Caco-2 (cell line): ENCODE measurements at regions of chr2 and their contacts with region 1.

Region 1: DNA sequence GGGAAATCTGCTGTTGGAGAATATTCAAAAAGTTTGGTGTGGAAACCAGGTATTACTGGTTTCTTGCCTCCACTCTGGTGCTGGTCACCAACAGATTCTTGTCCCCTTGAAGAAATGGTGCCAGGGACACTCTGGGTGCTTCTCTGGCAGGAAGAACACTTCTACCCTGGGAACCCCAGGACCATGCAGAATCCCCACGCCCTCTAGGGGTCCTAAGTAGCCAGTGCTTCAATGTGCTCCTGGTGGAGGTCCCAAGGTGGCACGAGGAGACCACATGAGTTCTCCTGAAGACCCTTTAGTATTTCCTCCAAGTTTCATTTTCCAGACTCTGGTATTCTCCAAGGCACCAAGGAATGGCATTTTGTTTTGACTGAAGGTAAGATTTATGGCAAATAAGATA is 380.6 kb downstream of the TSN start:
- DNase-seq: peak in 1 of 2 experiments; percentile 45
- H3K4me3 ChIP-seq: no peak overlapping the region
- H3K4me3 Mint-ChIP-seq: no peak overlapping the region
- H3K27ac Mint-ChIP-seq: no peak overlapping the region
- H3K4me1 ChIP-seq: peaks cover 24% of the 10 kb centered on the region
- H3K4me1 Mint-ChIP-seq: peaks cover 15% of the 10 kb centered on the region
- H3K27me3 ChIP-seq: no peaks in the 10 kb centered on the region
- H3K27me3 Mint-ChIP-seq: no peaks in the 10 kb centered on the region
- CTCF ChIP-seq: peak; percentile 39 to 64

Region 2: GRCh38 chr2:121722479-121722878 is 413.6 kb before region 1 on chr2:
- CTCF ChIA-PET with region 1: no interaction called
- POLR2A ChIA-PET with region 1: no interaction called
- intact Hi-C with region 1: no loop called
- DNase-seq: no peak
- H3K4me3 ChIP-seq: no peak overlapping the region
- H3K4me3 Mint-ChIP-seq: no peak overlapping the region
- H3K27ac Mint-ChIP-seq: no peak overlapping the region
- H3K4me1 ChIP-seq: no peaks in the 10 kb centered on the region
- H3K4me1 Mint-ChIP-seq: no peaks in the 10 kb centered on the region
- H3K27me3 ChIP-seq: no peaks in the 10 kb centered on the region
- H3K27me3 Mint-ChIP-seq: no peaks in the 10 kb centered on the region
- CTCF ChIP-seq: no peak

Region 3: GRCh38 chr2:121897335-121897970 is 238.6 kb before region 1 on chr2:
- CTCF ChIA-PET with region 1: no interaction called
- POLR2A ChIA-PET with region 1: no interaction called
- intact Hi-C with region 1: no loop called
- DNase-seq: peak; percentile 53 to 60
- H3K4me3 ChIP-seq: no peak overlapping the region
- H3K4me3 Mint-ChIP-seq: no peak overlapping the region
- H3K27ac Mint-ChIP-seq: no peak overlapping the region
- H3K4me1 ChIP-seq: no peaks in the 10 kb centered on the region
- H3K4me1 Mint-ChIP-seq: no peaks in the 10 kb centered on the region
- H3K27me3 ChIP-seq: no peaks in the 10 kb centered on the region
- H3K27me3 Mint-ChIP-seq: no peaks in the 10 kb centered on the region
- CTCF ChIP-seq: peak; percentile 39 to 61

Region 4: DNA sequence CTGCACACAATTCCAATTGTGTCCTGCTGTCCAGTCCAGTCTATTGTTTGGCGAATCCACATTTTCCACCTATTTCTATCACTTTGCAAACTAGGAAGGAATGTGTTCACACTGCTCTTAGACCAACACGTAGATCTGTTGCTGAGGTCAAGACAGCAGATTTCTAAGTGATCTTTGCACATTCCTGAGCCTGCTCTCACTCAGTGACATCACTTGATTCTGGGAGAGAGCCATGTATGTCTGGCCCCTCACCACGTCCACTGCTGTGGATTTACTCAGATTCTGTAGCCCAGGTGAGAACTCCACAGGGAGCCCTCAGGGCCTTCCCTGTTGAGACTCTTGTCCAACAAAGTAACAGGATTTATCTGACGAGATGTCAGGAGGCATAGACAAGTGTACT is 63.4 kb before region 1 on chr2:
- CTCF ChIA-PET with region 1: no interaction called
- POLR2A ChIA-PET with region 1: no interaction called
- intact Hi-C with region 1: loop called (anchors 1 kb)
- DNase-seq: peak; percentile 37 to 54
- H3K4me3 ChIP-seq: no peak overlapping the region
- H3K4me3 Mint-ChIP-seq: no peak overlapping the region
- H3K27ac Mint-ChIP-seq: peak overlapping the region; percentile 26
- H3K4me1 ChIP-seq: peaks cover 13% of the 10 kb centered on the region
- H3K4me1 Mint-ChIP-seq: peaks cover 6% of the 10 kb centered on the region
- H3K27me3 ChIP-seq: no peaks in the 10 kb centered on the region
- H3K27me3 Mint-ChIP-seq: no peaks in the 10 kb centered on the region
- CTCF ChIP-seq: no peak

Region 5: DNA sequence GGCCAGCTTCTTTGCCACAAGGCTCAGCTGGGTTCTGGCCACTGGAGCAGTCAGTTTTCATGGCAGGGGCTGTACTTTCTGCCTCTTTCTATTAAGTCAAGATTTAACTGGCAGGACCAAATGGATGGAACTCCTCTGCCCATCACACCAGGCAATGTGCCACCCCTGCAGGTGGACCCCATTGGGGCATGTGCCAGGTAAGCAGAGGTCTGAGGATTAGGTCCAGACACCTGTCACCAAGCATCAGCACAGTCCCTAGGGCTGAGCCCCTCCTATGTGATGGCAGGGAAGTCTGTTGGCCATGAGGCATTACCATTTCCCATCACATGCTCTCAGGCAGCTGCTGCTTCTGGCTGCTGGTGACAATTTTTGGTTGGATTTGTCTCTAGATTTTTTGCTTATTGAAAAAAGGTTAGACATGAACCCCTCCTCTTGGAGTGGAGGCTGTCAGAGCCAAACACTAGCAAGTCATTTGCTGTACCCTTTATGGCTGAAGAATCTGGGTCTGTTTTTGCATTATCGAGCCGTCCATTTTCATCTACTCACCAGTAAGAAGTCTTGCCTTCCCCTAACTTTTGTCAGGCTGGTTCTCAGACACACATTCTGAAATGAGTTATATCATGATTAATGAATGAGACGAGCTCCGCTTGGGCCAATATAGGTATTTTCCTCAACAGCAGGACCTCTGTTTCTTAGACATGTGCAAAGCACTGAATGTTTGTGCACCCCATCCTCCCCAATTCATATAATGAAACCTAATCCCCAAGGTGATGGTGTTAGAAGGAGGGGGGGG is 52.6 kb before region 1 on chr2:
- CTCF ChIA-PET with region 1: no interaction called
- POLR2A ChIA-PET with region 1: no interaction called
- intact Hi-C with region 1: no loop called
- DNase-seq: no peak
- H3K4me3 ChIP-seq: no peak overlapping the region
- H3K4me3 Mint-ChIP-seq: no peak overlapping the region
- H3K27ac Mint-ChIP-seq: no peak overlapping the region
- H3K4me1 ChIP-seq: no peaks in the 10 kb centered on the region
- H3K4me1 Mint-ChIP-seq: no peaks in the 10 kb centered on the region
- H3K27me3 ChIP-seq: no peaks in the 10 kb centered on the region
- H3K27me3 Mint-ChIP-seq: peaks cover 9% of the 10 kb centered on the region
- CTCF ChIP-seq: no peak

Region 6: GRCh38 chr2:122105877-122106206 is 30.2 kb before region 1 on chr2:
- CTCF ChIA-PET with region 1: no interaction called
- POLR2A ChIA-PET with region 1: no interaction called
- intact Hi-C with region 1: loop called (anchors 2 kb)
- DNase-seq: peak; percentile 63 to 68
- H3K4me3 ChIP-seq: no peak overlapping the region
- H3K4me3 Mint-ChIP-seq: peak overlapping the region; percentile 66
- H3K27ac Mint-ChIP-seq: peak overlapping the region; percentile 65
- H3K4me1 ChIP-seq: peaks cover 30% of the 10 kb centered on the region
- H3K4me1 Mint-ChIP-seq: peaks cover 50% of the 10 kb centered on the region
- H3K27me3 ChIP-seq: no peaks in the 10 kb centered on the region
- H3K27me3 Mint-ChIP-seq: no peaks in the 10 kb centered on the region
- CTCF ChIP-seq: no peak